AG04450 (cell line): ENCODE measurements at regions of chr21 and their contacts with region 1.

Region 1: GRCh38 chr21:25385911-25386474 is 221.3 kb downstream of the MRPL39 start:
- DNase-seq: peak; percentile 47
- H3K4me3 ChIP-seq: no peak overlapping the region
- H3K27ac ChIP-seq: no peak overlapping the region
- H3K27me3 ChIP-seq: no peaks in the 10 kb centered on the region
- CTCF ChIP-seq: peak; percentile 74

Region 2: GRCh38 chr21:24895885-24896734 is 489.9 kb before region 1 on chr21:
- CTCF ChIA-PET with region 1: interaction called, 30 read pairs
- POLR2A ChIA-PET with region 1: no interaction called
- DNase-seq: no peak
- H3K4me3 ChIP-seq: no peak overlapping the region
- H3K27ac ChIP-seq: no peak overlapping the region
- H3K27me3 ChIP-seq: no peaks in the 10 kb centered on the region
- CTCF ChIP-seq: peak; percentile 61

Region 3: GRCh38 chr21:25283720-25284119 is 102.3 kb before region 1 on chr21:
- CTCF ChIA-PET with region 1: interaction called, 126 read pairs
- POLR2A ChIA-PET with region 1: interaction called, 3 read pairs
- DNase-seq: peak; percentile 7
- H3K4me3 ChIP-seq: no peak overlapping the region
- H3K27ac ChIP-seq: no peak overlapping the region
- H3K27me3 ChIP-seq: no peaks in the 10 kb centered on the region
- CTCF ChIP-seq: peak; percentile 53

Region 4: GRCh38 chr21:25313829-25314228 is 72.2 kb before region 1 on chr21:
- CTCF ChIA-PET with region 1: interaction called, 15 read pairs
- POLR2A ChIA-PET with region 1: no interaction called
- DNase-seq: peak; percentile 20
- H3K4me3 ChIP-seq: no peak overlapping the region
- H3K27ac ChIP-seq: no peak overlapping the region
- H3K27me3 ChIP-seq: no peaks in the 10 kb centered on the region
- CTCF ChIP-seq: peak; percentile 59

Region 5: GRCh38 chr21:25350056-25350455 is 35.9 kb before region 1 on chr21:
- CTCF ChIA-PET with region 1: interaction called, 49 read pairs
- POLR2A ChIA-PET with region 1: no interaction called
- DNase-seq: no peak
- H3K4me3 ChIP-seq: no peak overlapping the region
- H3K27ac ChIP-seq: no peak overlapping the region
- H3K27me3 ChIP-seq: no peaks in the 10 kb centered on the region
- CTCF ChIP-seq: peak; percentile 67

Region 6: GRCh38 chr21:25396135-25396711 is 10.2 kb after region 1 on chr21:
- CTCF ChIA-PET with region 1: interaction called, 10 read pairs
- POLR2A ChIA-PET with region 1: no interaction called
- DNase-seq: no peak
- H3K4me3 ChIP-seq: no peak overlapping the region
- H3K27ac ChIP-seq: no peak overlapping the region
- H3K27me3 ChIP-seq: no peaks in the 10 kb centered on the region
- CTCF ChIP-seq: no peak

Region 7: DNA sequence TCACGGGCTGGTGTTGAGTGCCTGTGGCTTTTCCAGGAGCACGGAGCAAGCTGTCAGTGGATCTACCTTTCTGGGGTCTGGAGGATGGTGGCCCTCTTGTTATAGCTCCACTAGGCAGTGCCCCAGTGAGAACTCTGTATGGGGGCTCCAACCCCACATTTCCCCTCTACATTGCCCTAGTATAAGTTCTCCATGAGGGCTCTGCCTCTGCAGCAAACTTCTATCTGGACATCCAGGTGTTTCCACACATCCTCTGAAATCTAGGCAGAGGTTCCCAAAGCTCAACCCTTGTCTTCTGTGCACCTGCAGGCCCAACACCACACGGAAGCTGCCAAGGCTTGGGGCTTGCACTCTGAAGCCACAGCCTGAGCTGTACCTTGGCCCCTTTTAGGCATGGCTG is 64.0 kb after region 1 on chr21:
- CTCF ChIA-PET with region 1: no interaction called
- POLR2A ChIA-PET with region 1: no interaction called
- DNase-seq: no peak
- H3K4me3 ChIP-seq: no peak overlapping the region
- H3K27ac ChIP-seq: no peak overlapping the region
- H3K27me3 ChIP-seq: no peaks in the 10 kb centered on the region
- CTCF ChIP-seq: no peak

Region 8: GRCh38 chr21:25589887-25590286 is 203.9 kb after region 1 on chr21:
- CTCF ChIA-PET with region 1: no interaction called
- POLR2A ChIA-PET with region 1: no interaction called
- DNase-seq: no peak
- H3K4me3 ChIP-seq: no peak overlapping the region
- H3K27ac ChIP-seq: no peak overlapping the region
- H3K27me3 ChIP-seq: no peaks in the 10 kb centered on the region
- CTCF ChIP-seq: no peak